PC-3 (cell line): ENCODE measurements at regions of chr2 and their contacts with region 1.

Region 1: GRCh38 chr2:127387655-127388422 is at the start of gene MAP3K2:
- DNase-seq: peak; percentile 96
- ATAC-seq: peak; percentile 79
- H3K4me3 ChIP-seq: peak within 1 kb of the TSS; percentile 84
- H3K27ac ChIP-seq: peak within 1 kb of the TSS; percentile 90
- H3K4me1 ChIP-seq: peaks cover 28% of the 10 kb centered on the region
- H3K27me3 ChIP-seq: no peaks in the 10 kb centered on the region
- CTCF ChIP-seq: no peak
- total RNA-seq, gene MAP3K2: 54.6 and 64.7 TPM in 2 replicates

Region 2: GRCh38 chr2:127348426-127349000 is 39.3 kb before region 1 on chr2:
- CTCF ChIA-PET with region 1: no interaction called
- POLR2A ChIA-PET with region 1: no interaction called
- intact Hi-C with region 1: no loop called
- DNase-seq: no peak
- ATAC-seq: no peak
- H3K4me3 ChIP-seq: no peak overlapping the region
- H3K27ac ChIP-seq: no peak overlapping the region
- H3K4me1 ChIP-seq: no peaks in the 10 kb centered on the region
- H3K27me3 ChIP-seq: no peaks in the 10 kb centered on the region
- CTCF ChIP-seq: no peak

Region 3: DNA sequence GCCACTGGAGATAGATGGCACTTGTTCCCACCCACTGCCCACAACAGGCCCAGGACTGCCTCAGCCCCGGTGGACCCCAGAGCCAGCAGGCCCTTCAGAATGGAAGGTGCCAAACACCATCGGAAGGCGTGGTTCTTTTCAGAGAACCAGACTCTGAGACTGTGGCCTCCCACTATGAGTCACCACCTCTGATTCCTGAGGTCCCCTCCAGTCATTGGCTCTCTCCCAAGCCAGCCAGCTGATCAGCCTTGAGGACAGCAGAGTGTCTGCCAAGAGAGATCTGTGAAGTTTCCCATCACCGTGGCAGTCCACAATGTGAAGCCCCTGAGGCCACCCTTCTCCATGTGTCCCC is 10.4 kb after region 1 on chr2:
- CTCF ChIA-PET with region 1: no interaction called
- POLR2A ChIA-PET with region 1: interaction called, 3 read pairs
- intact Hi-C with region 1: loop called (anchors 1 kb)
- DNase-seq: peak; percentile 97
- ATAC-seq: peak; percentile 76
- H3K4me3 ChIP-seq: no peak overlapping the region
- H3K27ac ChIP-seq: no peak overlapping the region
- H3K4me1 ChIP-seq: peaks cover 33% of the 10 kb centered on the region
- H3K27me3 ChIP-seq: no peaks in the 10 kb centered on the region
- CTCF ChIP-seq: no peak

Region 4: DNA sequence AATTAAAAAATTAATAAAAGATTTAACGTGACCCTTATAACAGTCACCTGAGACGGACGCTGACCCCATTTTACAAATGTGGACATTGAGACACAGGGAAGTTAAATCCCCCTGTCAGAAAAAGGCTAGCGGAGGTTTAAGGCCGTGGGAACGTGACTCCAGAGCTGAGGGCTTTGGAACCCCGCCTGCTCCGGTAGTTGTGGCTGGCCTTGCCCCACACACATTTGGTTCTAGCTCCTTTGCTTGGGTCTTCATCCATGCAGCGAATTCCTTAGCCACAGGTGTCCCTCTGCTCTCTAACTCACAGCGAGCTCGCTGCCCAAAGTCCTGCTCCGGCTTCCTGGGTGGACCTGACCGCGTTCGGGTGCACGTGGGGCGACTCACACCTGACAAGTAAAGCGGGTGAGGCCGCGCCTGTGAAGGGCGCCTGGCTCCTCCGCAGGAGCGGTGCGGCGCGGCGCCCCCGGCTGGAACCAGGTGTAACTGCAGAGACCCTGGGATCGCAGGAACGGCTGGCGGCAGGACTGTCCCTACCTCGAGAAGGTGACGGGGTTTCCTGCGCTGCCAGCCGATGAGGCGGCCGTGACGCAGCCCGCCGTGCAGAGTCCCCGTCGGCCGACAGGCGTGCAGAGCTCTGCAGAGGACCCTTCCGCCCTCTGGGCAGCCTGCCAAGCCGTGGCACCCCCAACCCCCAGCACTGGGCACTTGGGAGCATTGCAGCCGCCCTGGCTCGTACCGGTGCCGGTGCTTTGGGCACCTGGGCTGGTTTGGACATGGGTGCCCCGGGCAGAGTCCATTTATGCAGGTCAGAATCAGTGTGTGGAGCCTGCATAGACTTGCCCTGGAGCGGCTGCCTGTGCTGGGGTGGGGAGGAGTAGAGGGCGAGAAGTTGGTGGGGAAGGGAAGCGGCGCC is 28.0 kb after region 1 on chr2:
- CTCF ChIA-PET with region 1: no interaction called
- POLR2A ChIA-PET with region 1: no interaction called
- intact Hi-C with region 1: loop called (anchors 2 kb)
- DNase-seq: peak; percentile 82
- ATAC-seq: peak; percentile 69
- H3K4me3 ChIP-seq: peak overlapping the region; percentile 64
- H3K27ac ChIP-seq: no peak overlapping the region
- H3K4me1 ChIP-seq: peaks cover 41% of the 10 kb centered on the region
- H3K27me3 ChIP-seq: no peaks in the 10 kb centered on the region
- CTCF ChIP-seq: peak; percentile 86

Region 5: DNA sequence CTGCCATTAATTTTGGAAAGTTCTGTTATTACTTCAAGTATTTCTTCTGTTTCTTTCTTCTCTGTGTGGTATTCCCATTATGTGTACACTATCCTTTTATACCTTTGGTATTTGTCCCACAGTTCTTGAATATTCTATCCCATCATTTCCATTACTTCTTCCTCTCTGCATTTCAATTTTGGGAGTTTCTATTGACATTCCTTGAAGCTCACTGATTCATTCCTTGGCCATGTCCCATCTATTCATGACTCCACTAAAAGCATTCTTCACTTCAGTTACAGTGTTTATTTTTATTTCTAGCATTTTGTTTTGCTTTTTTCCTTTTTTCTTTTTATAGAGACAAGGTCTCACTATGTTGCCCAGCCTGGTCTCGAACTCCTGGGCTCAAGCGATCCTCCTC is 60.7 kb after region 1 on chr2:
- CTCF ChIA-PET with region 1: no interaction called
- POLR2A ChIA-PET with region 1: no interaction called
- intact Hi-C with region 1: no loop called
- DNase-seq: peak; percentile 60
- ATAC-seq: peak; percentile 92
- H3K4me3 ChIP-seq: no peak overlapping the region
- H3K27ac ChIP-seq: no peak overlapping the region
- H3K4me1 ChIP-seq: peaks cover 11% of the 10 kb centered on the region
- H3K27me3 ChIP-seq: no peaks in the 10 kb centered on the region
- CTCF ChIP-seq: no peak